ENCODE measurements at regions of chr1 and their contacts with region 1.

Region 1: DNA sequence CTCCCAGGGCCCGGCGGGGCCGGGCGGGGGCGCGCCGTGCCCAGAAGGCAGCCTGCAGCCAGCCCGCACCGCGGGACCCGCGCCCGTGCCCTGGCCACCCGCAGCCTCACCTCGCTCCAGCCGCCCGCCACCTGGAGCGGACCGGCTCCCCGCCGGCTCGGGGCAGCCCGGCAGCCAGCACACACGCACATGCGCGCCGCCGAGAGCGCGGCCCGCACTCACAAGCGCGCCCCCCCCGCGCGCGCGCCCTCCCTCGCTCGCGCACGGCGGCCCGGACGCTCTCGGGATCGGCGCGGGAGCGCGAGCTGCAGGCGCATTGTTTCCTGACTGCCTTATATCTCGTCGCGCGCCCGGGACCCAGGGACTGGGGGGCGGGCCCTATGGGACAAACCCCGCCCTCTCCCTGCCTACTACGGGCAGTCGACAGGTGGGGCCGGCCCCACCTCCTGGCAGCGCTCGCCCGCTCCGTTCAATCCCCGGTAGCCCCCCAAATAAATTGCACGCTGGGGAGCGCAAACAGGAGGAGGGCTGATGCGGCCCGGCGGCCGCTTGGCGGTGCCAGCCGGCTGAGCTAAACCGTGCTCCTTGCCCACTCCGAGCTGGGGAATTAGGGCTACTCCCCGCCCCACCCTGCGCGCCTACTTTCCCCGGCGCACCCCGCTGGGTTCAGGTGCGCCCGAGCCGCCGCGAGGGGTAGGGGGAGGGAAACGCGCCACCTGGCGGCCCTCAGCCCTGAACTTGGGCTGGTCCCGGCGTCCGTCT is at the start of gene MYCL:
- DNase-seq: peak; percentile 77 to 97
- H3K4me3 ChIP-seq: peak within 1 kb of the TSS; percentile 71
- H3K27ac ChIP-seq: no peak within 1 kb of the TSS
- H3K4me1 ChIP-seq: peaks cover 13% of the 10 kb centered on the region; the same call in 1 of the 2 replicates
- H3K27me3 ChIP-seq: peaks cover 30% of the 10 kb centered on the region
- CTCF ChIP-seq: peak; percentile 85
- total RNA-seq, gene MYCL: 3.8 and 6.2 TPM in 2 replicates

Region 2: GRCh38 chr1:39590551-39590950 is 311.3 kb before region 1 on chr1:
- CTCF ChIA-PET with region 1: no interaction called
- POLR2A ChIA-PET with region 1: no interaction called
- intact Hi-C with region 1: loop called (anchors 10 kb)
- DNase-seq: peak; percentile 25 to 71
- H3K4me3 ChIP-seq: no peak overlapping the region
- H3K27ac ChIP-seq: no peak overlapping the region
- H3K4me1 ChIP-seq: peaks cover 32% of the 10 kb centered on the region
- H3K27me3 ChIP-seq: no peaks in the 10 kb centered on the region
- CTCF ChIP-seq: no peak

Region 3: DNA sequence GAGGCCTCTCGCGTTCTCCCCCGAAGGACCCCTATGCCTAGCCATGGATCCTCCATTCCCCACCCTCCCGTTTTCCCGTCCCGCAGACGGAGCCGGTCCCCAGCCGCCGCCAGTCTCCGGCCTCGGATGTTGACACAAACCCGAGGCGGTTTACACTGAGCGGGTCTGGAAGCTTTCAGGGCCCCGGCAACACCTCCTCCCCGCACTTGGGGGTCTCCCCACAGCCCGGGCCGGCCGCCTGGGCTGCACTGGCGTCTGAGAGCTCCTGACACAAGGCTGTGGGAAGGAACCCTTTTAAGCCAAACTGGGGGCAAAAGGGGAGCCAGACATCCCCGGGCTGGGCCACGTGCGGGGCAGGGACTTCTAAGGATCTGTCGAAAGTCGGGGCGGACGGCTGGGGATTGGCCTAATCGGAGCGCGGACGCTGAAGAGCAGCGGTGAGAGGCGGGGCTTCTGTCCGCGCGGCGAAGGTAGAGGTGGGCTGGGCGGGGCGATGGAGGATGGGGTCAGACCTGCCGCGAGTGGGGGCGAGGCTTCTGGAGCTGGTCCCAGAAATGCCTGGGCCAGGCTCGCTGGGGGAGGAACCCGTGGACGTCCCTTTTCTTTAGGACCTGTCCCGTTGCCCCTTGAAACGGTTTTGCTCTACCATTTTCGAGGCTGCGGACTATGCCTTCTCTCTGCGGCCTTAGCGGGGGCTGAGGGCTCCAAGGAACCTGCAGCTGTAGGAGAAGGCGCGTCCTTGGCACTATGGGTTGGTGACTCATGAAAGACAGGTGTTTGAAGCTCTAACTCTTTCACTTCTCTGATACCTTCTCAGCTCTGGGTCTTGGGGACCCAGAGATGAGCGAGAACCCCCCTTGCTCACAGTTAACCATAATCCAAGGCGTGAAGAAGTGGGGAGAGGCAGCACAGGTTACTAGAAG is 209.5 kb before region 1 on chr1:
- CTCF ChIA-PET with region 1: no interaction called
- POLR2A ChIA-PET with region 1: no interaction called
- intact Hi-C with region 1: no loop called
- DNase-seq: no peak
- H3K4me3 ChIP-seq: no peak overlapping the region
- H3K27ac ChIP-seq: no peak overlapping the region
- H3K4me1 ChIP-seq: peaks cover 15% of the 10 kb centered on the region
- H3K27me3 ChIP-seq: peaks cover 15% of the 10 kb centered on the region; the same call in 1 of the 2 replicates
- CTCF ChIP-seq: no peak

Region 4: GRCh38 chr1:39816415-39817090 is 85.3 kb before region 1 on chr1:
- CTCF ChIA-PET with region 1: interaction called, 7 read pairs
- POLR2A ChIA-PET with region 1: no interaction called
- intact Hi-C with region 1: loop called (anchors 1 kb)
- DNase-seq: peak; percentile 90 to 97
- H3K4me3 ChIP-seq: no peak overlapping the region
- H3K27ac ChIP-seq: peak overlapping the region; percentile 36; the same call in 1 of the 2 replicates
- H3K4me1 ChIP-seq: peaks cover 21% of the 10 kb centered on the region
- H3K27me3 ChIP-seq: no peaks in the 10 kb centered on the region
- CTCF ChIP-seq: peak; percentile 83

Region 5: DNA sequence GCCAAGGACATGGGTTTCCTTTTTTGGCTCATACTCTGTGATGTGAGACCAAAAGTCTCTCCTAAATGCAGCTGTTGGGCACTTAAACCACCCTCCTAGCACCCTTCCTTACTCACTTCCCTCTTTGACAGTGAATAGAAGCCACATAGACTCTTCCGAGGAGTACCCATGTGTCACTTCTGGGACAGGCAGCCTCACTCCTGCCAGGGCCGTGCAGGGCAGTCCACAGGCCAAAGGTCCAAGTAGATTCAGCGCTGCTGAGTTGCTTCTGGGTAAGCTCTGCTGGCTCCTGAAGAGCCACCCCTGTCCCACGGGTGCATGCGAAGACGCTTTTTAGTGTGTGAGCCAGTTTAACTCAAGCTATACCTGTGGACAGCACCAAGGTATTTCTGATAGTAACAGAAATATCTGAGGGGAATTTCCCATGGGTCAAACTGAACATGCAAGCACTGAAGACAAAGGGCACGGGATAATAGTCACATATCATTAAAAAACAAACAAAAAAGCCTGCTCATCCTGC is 76.4 kb before region 1 on chr1:
- CTCF ChIA-PET with region 1: no interaction called
- POLR2A ChIA-PET with region 1: interaction called, 3 read pairs
- intact Hi-C with region 1: loop called (anchors 5 kb)
- DNase-seq: peak in 1 of 2 experiments; percentile 37
- H3K4me3 ChIP-seq: no peak overlapping the region
- H3K27ac ChIP-seq: no peak overlapping the region
- H3K4me1 ChIP-seq: peaks cover 27% of the 10 kb centered on the region
- H3K27me3 ChIP-seq: no peaks in the 10 kb centered on the region
- CTCF ChIP-seq: no peak

Region 6: DNA sequence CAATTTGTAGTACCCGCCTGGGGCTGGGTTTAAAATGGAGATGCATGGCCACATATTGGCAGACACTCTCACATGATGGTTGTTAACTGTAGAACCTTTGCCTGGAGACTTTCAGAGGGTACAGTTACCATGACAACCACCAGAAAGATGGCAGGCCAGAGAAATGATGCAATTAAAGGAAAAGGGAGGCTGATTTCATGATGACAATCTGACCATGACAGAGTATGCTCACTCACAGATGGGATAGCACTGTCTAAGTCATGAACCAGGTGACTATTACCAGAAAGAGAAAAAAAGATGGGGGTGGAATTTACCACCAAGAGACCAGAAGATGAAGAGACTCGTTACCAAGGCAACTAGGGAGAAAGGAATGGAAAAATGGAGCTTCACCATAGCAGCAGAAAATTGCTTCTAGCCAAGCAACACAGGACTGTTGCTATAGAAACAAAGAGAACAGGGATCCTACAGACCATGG is 15.1 kb before region 1 on chr1:
- CTCF ChIA-PET with region 1: interaction called, 5 read pairs
- POLR2A ChIA-PET with region 1: interaction called, 23 read pairs
- intact Hi-C with region 1: loop called (anchors 2 kb)
- DNase-seq: no peak
- H3K4me3 ChIP-seq: no peak overlapping the region
- H3K27ac ChIP-seq: no peak overlapping the region
- H3K4me1 ChIP-seq: peaks cover 20% of the 10 kb centered on the region
- H3K27me3 ChIP-seq: no peaks in the 10 kb centered on the region
- CTCF ChIP-seq: no peak

Region 7: DNA sequence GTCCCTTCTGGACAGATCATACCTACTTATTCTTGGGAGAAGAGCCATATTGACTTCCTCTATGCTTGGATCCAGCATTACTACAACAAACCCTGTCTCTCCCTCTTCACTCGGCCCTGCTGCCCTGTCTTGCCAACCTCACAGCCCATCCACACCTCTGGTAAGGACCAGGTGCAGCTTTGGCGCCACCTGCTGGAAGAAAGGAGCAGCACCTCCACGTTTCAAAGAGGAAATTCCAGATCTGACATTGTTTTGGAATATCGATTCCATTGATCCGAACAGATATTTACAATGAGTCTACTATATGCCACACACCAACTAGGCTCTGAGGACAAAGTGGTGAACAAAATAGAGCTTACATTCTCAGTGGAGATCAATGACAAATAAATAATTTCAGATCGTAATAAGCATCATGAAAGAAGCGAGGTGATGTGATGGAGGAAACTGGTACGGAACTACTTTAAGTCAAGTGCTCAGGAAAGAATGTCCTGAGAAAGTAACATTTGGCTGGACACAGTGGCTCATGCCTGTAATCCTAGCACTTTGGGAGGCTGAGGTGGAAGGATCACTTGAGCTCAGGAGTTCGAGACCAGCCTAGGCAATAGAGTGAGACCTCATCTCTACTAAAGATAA is 71.7 kb after region 1 on chr1:
- CTCF ChIA-PET with region 1: interaction called, 4 read pairs
- POLR2A ChIA-PET with region 1: interaction called, 11 read pairs
- intact Hi-C with region 1: no loop called
- DNase-seq: peak; percentile 42 to 69
- H3K4me3 ChIP-seq: no peak overlapping the region
- H3K27ac ChIP-seq: no peak overlapping the region
- H3K4me1 ChIP-seq: no peaks in the 10 kb centered on the region; the same call in 1 of the 2 replicates
- H3K27me3 ChIP-seq: no peaks in the 10 kb centered on the region
- CTCF ChIP-seq: peak; percentile 98

Region 8: DNA sequence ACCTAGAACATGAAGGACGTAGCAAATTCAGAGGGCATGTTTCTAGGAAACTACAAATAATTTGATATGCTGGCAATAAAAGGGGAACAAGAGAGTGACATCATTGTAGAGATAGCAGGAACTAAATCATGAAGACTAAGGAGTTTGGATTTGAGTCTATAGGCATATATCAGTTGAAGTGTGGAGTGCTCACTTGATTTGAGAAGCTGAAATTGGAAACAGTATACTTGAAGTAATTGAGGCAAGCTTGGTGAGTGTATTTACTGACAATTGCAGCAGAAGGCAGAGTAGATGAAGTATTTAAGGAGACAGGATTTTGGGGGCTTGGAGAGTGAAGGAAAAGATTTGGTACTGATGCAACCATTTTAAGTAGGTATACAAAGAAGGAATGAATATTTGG is 339.5 kb after region 1 on chr1:
- CTCF ChIA-PET with region 1: no interaction called
- POLR2A ChIA-PET with region 1: no interaction called
- intact Hi-C with region 1: no loop called
- DNase-seq: no peak
- H3K4me3 ChIP-seq: peak overlapping the region; percentile 11; the same call in 1 of the 2 replicates
- H3K27ac ChIP-seq: peak overlapping the region; percentile 68
- H3K4me1 ChIP-seq: peaks cover 24% of the 10 kb centered on the region
- H3K27me3 ChIP-seq: no peaks in the 10 kb centered on the region
- CTCF ChIP-seq: no peak

Region 9: DNA sequence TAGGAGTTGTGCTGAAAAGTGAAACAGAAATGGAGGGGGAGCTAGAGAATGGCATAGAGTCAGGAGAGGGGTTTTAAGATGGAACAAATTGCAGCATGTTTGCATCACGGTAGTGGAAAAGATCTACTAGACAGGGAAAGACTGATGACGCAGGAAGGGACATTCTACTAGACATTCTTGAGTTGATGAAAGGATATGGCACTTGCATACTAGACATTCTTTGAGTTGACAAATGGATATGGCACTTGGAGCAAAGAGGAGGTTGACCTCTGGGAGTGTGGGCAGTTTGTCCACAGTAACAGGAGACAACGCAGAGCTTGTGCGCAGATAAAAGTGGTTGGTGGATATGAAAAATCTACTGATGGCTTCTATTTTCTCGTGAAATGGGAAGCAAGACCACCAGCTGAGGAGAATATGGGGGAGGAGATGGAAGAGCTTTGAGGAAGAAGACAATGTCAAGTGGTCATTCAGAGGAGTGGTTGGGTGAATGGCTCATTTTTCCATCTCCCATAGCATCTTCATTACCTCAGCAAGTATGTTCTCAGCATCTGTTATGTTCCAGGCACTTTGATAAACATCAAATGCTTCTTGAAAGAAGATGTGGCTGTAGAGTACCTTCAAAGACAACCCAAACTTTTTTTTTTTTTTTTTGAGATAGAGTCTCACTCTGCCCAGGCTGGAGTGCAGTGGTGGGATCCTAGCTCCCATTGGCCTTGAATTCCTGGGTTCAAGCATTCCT is 1075.2 kb after region 1 on chr1:
- CTCF ChIA-PET with region 1: no interaction called
- POLR2A ChIA-PET with region 1: no interaction called
- intact Hi-C with region 1: no loop called
- DNase-seq: peak in 1 of 2 experiments; percentile 61
- H3K4me3 ChIP-seq: no peak overlapping the region
- H3K27ac ChIP-seq: no peak overlapping the region
- H3K4me1 ChIP-seq: peaks cover 21% of the 10 kb centered on the region
- H3K27me3 ChIP-seq: no peaks in the 10 kb centered on the region
- CTCF ChIP-seq: no peak

Measured in PC-9 (cell line).